ENCODE measurements at regions of chr1 and their contacts with region 1.

Region 1: GRCh38 chr1:108892356-108893140 is 15.8 kb downstream of the GPSM2 start:
- DNase-seq: no peak
- H3K4me3 ChIP-seq: no peak overlapping the region
- CTCF ChIP-seq: no peak
- POLR2A ChIP-seq: no peak

Region 2: GRCh38 chr1:107499139-107499744 is 1393.3 kb before region 1 on chr1:
- intact Hi-C with region 1: no loop called
- DNase-seq: no peak
- H3K4me3 ChIP-seq: no peak overlapping the region
- CTCF ChIP-seq: no peak
- POLR2A ChIP-seq: no peak

Region 3: GRCh38 chr1:108828022-108828961 is 64.3 kb before region 1 on chr1:
- intact Hi-C with region 1: loop called (anchors 5 kb)
- DNase-seq: peak; percentile 84 to 96
- H3K4me3 ChIP-seq: no peak overlapping the region
- CTCF ChIP-seq: peak in 1 of 3 donors; percentile 31
- POLR2A ChIP-seq: no peak

Region 4: GRCh38 chr1:108913105-108913948 is 20.8 kb after region 1 on chr1:
- intact Hi-C with region 1: no loop called
- DNase-seq: no peak
- H3K4me3 ChIP-seq: no peak overlapping the region
- CTCF ChIP-seq: no peak
- POLR2A ChIP-seq: no peak

Measured in lower leg skin (tissue), 4 donors.